ENCODE measurements at regions of chr6 and their contacts with region 1.

Region 1: DNA sequence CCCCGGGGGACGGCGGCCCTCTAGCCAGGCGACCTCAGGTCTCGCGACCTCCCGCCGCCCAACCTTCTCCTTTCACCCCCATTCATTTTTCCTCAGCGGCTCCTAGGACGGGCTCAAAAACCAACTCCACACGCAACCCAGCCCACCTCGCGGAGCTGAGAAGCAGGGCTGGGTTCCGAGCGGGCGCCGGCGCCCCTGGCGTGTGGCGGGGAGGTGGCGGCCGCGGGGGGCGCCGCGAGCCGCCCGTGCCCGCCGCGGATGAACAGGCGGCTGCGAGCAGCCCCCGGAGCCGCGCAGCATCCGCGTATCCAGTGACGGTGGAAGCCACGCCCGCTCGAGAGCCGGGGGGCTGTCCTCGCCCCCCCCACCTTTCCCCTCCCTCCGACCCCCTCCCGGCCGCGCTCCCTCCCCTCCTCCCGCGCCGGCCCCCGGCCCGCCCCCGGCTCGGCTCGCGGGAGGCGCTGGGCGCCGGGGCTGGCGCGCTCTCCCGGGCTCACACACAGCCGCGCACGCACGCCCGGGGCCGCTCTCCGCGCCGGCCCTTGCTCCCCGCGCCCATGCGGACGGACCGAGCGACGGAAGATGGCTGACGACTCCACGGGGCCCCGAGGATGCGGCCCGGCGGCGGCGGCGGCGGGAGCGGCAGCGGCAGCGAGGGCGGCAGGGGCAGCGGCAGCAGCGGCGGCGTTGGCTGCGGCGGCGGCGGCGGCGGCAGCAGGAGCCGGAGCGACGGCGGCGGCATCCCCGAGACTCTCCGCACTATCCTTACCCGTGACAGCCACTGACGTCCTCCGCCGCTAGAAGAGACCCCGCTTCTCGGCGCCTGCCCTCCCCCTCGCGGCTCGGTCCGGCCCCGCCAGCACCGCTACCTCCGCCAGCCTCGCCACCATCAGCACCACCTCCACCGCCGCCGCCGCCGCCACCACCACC is at the start of gene SOBP:
- DNase-seq: peak; percentile 54
- H3K4me3 ChIP-seq: peak within 1 kb of the TSS; percentile 61 to 99 (median 88)
- H3K27ac ChIP-seq: peak within 1 kb of the TSS; percentile 59
- H3K4me1 ChIP-seq: peaks cover 50% of the 10 kb centered on the region
- H3K27me3 ChIP-seq: peaks cover 13 to 22% of the 10 kb centered on the region in 2 experiments
- CTCF ChIP-seq: peak; percentile 2 to 13
- POLR2A ChIP-seq: no peak
- total RNA-seq, gene SOBP: 6.1 and 6.6 TPM in 2 replicates

Region 2: DNA sequence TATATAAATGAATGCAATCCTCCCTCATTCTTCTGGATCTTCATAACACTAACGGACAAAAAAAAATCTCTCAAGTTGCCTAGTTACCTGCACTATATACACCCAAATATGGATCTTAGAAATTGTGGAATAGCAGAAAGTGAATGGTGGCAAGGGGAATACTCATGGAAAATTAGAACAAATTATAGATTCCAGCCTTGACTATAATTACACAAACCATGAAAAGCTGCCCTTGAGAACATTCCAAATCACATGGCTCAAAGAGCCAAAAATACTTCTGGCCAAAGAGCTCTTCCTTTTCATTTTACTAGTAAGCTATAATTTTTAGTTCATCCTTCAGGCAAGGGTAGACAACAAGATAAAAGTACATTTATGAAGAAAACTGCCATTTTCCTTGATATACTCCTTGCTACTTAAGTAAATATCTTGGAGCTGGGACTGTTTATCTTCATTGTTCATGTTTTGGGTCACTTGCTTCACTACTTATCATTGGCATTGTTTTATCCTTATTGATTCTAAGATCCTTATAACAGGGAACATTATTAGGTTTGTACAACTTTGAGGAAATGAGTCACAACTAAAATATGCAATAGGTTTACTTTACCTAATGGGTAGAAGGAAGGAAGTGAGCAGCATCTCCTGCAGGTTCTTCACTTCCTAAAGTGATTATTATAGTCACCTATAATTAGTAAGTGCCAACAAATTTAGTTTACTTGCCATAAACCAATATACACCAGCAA is 468.3 kb before region 1 on chr6:
- CTCF ChIA-PET with region 1: no interaction called
- POLR2A ChIA-PET with region 1: no interaction called
- dilution Hi-C with region 1: no loop called
- intact Hi-C with region 1: loop called (anchors 10 kb)
- DNase-seq: peak; percentile 8
- H3K4me3 ChIP-seq: no peak overlapping the region
- H3K27ac ChIP-seq: no peak overlapping the region
- H3K4me1 ChIP-seq: peaks cover 8% of the 10 kb centered on the region
- H3K27me3 ChIP-seq: no peaks in the 10 kb centered on the region
- CTCF ChIP-seq: no peak
- POLR2A ChIP-seq: no peak

Region 3: DNA sequence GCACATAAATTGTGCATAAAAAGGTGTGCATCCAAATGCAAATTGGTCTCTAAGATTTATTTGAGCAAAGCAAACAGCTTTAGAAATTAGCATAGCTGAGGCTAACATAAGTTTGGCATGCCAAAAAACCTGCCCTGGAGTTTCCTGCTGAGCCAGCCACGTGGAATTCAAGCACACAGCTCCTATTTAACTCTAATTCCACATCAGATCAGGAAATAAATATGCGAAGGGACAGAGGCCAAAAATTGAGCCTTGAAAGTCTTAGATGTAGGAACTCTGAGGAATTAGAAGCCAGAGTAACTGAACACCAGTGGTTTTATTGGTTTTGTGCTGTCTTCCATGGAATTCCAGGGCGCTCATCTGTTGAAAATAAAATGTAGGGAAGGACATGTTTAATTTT is 19.6 kb after region 1 on chr6:
- CTCF ChIA-PET with region 1: interaction called, 12 read pairs
- POLR2A ChIA-PET with region 1: no interaction called
- dilution Hi-C with region 1: no loop called
- intact Hi-C with region 1: no loop called
- DNase-seq: peak; percentile 22
- H3K4me3 ChIP-seq: no peak overlapping the region
- H3K27ac ChIP-seq: no peak overlapping the region
- H3K4me1 ChIP-seq: peaks cover 6% of the 10 kb centered on the region
- H3K27me3 ChIP-seq: no peaks in the 10 kb centered on the region
- CTCF ChIP-seq: no peak
- POLR2A ChIP-seq: no peak

Region 4: DNA sequence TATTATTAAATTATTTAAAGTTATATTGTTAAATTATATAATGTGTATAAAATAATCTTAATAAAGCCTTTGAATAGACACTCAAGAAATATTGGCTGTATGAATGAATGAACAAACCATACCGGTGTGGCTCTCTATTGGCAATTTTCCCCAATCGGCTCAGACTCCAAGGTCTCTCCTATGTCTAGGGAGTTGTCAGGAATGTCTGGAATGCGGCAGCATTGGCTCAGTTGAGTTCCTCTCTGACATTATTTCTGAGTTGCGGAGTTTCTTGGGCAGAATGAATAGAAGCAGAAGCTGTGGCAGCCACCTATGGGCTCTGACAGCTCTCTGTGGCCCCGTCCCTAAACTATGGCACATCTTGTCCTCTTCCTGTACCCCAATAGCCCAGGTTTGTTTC is 111.0 kb after region 1 on chr6:
- CTCF ChIA-PET with region 1: interaction called, 4 read pairs
- POLR2A ChIA-PET with region 1: no interaction called
- dilution Hi-C with region 1: no loop called
- intact Hi-C with region 1: loop called (anchors 5 kb)
- DNase-seq: peak; percentile 56
- H3K4me3 ChIP-seq: no peak overlapping the region
- H3K27ac ChIP-seq: no peak overlapping the region
- H3K4me1 ChIP-seq: peaks cover 12% of the 10 kb centered on the region
- H3K27me3 ChIP-seq: no peaks in the 10 kb centered on the region
- CTCF ChIP-seq: no peak
- POLR2A ChIP-seq: no peak

Region 5: GRCh38 chr6:107657755-107658461 is 168.0 kb after region 1 on chr6:
- CTCF ChIA-PET with region 1: interaction called, 5 read pairs
- POLR2A ChIA-PET with region 1: no interaction called
- dilution Hi-C with region 1: no loop called
- intact Hi-C with region 1: loop called (anchors 1 kb)
- DNase-seq: peak; percentile 79
- H3K4me3 ChIP-seq: peak overlapping the region; percentile 5 to 33 (median 11)
- H3K27ac ChIP-seq: peak overlapping the region; percentile 48
- H3K4me1 ChIP-seq: peaks cover 23% of the 10 kb centered on the region
- H3K27me3 ChIP-seq: no peaks in the 10 kb centered on the region
- CTCF ChIP-seq: peak; percentile 17 to 58
- POLR2A ChIP-seq: no peak

Region 6: DNA sequence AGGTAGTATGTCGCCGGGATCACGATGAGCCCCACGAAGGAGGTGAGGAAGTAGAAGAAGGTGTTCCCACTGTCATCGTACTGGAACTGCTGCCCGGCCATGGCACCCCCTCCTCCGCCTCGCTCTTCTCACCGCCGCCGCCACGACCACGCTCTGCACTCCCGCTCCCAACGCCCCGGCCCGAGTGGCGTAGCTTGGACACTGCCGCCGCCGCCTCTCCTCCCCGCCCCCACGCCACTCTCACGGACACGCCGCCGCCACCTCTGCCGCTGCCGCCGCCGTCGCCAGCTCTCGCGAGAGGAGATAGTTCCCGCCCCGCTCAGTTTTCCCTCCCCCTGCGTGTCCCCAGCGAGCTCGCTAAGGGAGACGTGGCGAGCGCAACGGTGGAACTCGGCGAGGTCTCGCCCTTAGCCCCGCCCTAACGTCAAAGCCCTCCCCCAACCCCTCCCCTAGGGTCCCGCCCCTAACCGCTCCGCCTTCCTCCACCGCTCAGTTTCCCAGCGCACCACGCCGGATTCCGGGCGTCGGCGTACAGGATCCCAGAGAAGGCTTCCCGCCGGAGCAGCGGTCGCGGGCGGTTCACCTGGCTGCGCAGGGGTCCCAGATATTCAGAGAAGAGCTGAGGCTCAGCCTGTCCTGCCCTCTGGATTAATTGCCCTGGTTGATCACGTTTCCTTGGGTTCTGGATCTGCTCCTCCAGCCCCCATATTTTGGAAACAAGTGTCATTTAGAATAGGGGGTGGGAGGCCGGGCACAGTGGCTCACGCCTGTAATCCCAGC is 468.2 kb after region 1 on chr6 and contains the start of gene SEC63:
- CTCF ChIA-PET with region 1: no interaction called
- POLR2A ChIA-PET with region 1: no interaction called
- dilution Hi-C with region 1: no loop called
- intact Hi-C with region 1: loop called (anchors 10 kb)
- DNase-seq: peak; percentile 97
- H3K4me3 ChIP-seq: peak within 1 kb of the TSS; percentile 79 to 94 (median 93)
- H3K27ac ChIP-seq: peak within 1 kb of the TSS; percentile 91
- H3K4me1 ChIP-seq: peaks cover 10% of the 10 kb centered on the region
- H3K27me3 ChIP-seq: no peaks in the 10 kb centered on the region
- CTCF ChIP-seq: no peak
- POLR2A ChIP-seq: peak; percentile 82
- total RNA-seq, gene SEC63: 111 and 132 TPM in 2 replicates

Measured in endothelial cell of umbilical vein (primary cell).